ENCODE measurements at regions of chr11 and their contacts with region 1.

Region 1: DNA sequence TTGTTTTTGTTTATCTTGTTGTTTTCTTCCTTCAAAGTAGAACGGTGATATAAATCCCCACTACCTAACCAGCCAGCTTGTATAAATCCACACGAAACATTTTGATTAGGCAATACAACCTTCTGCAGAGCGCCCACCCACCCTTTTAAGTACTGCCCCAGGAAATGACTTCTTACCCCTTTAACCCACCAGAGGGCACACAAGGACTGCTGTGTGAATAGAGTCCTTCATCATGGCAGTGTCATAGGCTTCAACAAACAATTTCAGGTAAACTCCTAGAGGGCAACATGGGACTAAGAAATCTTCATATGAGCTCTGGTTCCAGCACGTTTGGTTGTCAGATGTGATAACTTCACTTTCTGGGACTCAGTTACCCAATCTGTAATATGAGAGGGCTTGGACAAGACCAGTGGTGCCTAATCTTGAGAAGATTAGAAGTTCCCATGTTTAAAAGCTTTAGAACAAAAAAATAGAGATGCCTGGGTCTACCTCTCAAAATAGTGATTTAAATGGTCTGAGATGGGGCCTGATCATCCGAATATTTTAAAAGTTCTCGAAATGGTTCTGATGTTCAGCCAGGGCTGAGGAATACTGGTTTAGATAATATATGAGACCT is 56.1 kb downstream of the PIWIL4 start:
- DNase-seq: peak; percentile 86
- H3K4me3 Mint-ChIP-seq: no peak overlapping the region
- H3K27ac Mint-ChIP-seq: no peak overlapping the region
- H3K4me1 Mint-ChIP-seq: peaks cover 6% of the 10 kb centered on the region
- H3K27me3 Mint-ChIP-seq: no peaks in the 10 kb centered on the region
- CTCF ChIP-seq: peak; percentile 81

Region 2: DNA sequence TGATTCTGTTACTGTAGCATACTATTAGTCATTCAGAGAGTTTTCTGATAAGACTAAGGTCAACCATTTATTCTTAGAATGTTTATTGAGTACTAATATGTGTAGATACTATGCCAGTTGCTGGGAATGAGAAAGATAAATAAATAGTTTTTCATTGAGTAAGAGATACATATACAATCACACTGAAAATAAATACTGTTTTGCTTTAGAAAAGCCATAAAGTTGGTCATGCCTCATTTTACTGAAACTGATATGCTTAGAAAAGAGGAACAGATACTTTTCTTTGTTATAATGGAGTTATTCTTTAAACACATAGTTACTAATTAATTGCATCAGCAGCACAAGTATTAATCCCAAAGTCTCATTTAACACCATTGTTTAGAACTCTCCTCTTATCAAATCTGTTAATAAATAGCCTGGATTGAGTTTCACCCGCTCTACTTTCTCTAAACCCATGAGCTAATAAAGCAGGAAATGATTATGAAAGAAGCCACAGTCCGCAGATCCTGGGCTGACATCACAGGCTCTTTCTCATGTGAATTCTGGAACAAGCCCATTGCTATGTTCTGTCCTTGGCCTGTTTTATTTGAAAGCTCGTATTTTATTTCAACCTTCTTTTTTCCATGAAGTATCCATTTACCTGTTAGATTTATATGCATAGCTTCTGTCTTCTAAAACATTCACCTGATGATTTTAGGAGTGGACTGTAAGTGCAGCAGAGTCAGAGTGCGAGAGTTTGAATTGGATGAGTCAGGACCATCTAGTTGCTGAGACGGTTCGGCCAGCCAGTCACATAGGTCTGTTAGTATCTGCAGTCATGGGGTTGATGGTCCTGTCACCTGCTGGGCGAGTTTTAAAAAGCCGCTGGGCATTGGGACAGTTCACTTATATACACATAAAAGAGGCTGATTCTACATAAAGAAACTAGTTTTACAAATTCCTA is 20.5 kb before region 1 on chr11:
- CTCF ChIA-PET with region 1: interaction called, 13 read pairs
- POLR2A ChIA-PET with region 1: no interaction called
- intact Hi-C with region 1: no loop called
- DNase-seq: no peak
- H3K4me3 Mint-ChIP-seq: no peak overlapping the region
- H3K27ac Mint-ChIP-seq: no peak overlapping the region
- H3K4me1 Mint-ChIP-seq: no peaks in the 10 kb centered on the region
- H3K27me3 Mint-ChIP-seq: no peaks in the 10 kb centered on the region
- CTCF ChIP-seq: no peak

Region 3: DNA sequence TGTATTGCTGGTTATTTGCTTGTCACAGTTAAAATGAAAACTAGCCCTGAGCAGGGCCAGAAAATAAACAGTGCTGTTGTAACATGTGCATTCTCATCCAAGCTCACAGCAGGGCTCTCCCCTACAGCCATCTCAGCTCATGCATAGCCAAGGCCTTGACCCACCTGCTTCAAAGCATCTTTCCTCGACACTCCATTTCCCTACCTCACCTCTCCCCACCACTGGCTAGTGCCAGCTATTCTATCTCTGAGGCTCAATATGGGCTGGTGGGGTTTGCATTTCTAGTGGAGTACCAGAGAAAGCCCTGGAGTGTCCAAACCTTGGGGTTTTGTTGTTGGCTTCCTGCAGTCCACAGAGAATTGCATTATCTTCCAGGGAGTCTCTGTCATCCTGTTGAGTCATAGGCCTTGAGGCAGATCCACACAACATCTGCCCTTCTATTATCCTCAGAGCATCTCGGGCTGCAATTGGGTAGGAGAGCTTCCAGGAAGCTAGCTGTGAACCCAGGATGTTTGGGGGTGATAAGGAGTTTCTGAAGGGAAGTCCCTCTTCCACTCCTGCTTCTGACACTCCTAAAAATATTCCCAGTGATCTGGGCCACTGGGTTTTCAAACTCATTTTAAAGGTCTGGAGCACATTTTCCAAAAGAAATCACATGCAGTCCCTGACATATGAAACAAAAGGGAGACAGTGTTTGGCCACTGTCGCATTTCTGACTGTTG is 108.8 kb after region 1 on chr11:
- CTCF ChIA-PET with region 1: interaction called, 18 read pairs
- POLR2A ChIA-PET with region 1: no interaction called
- intact Hi-C with region 1: no loop called
- DNase-seq: peak; percentile 95
- H3K4me3 Mint-ChIP-seq: no peak overlapping the region
- H3K27ac Mint-ChIP-seq: peak overlapping the region; percentile 77
- H3K4me1 Mint-ChIP-seq: peaks cover 34% of the 10 kb centered on the region
- H3K27me3 Mint-ChIP-seq: no peaks in the 10 kb centered on the region
- CTCF ChIP-seq: no peak

Region 4: DNA sequence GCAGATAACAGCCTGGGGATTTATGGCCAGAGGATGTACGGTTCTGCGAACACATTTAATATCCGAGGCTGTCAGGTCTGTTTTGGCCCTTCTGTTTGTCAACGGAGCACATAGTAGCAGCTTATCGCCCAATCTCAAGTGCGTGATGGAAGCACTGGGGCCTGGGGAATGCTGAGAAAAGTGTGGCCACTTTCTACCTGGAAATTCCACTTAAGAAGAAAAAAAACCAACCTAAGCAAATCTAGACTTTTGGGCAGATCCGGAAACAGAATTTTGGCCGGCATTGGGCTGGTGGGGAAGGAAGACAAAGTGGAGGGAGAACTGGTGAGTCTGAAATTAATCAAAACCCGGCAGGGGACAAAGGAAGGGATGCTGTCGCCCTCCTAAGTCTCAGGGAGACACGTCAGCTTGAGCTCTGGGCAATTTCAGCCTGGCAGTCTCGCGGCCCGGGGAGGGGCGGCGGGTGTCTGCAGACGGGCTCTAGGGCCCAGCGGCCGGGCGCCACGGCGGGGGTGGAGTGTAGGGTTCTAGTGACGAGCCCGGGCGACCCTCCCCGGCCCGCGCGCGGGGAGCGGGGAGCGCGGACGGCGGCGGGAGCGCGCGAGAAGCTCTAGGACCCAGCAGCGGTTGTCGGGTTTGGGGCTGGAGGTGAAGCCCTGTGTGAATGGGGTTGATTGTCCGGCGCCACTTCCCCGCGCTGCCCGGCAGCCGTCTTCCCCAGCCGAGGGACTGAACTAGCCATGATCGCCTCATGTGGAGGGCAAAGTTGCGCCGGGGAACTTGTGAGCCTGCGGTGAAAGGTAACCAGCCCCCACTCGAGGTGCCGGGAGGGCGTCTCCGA is 144.8 kb after region 1 on chr11 and contains the start of gene AMOTL1:
- CTCF ChIA-PET with region 1: interaction called, 25 read pairs
- POLR2A ChIA-PET with region 1: interaction called, 5 read pairs
- intact Hi-C with region 1: no loop called
- DNase-seq: peak; percentile 83
- H3K4me3 Mint-ChIP-seq: peak within 1 kb of the TSS; percentile 89
- H3K27ac Mint-ChIP-seq: peak within 1 kb of the TSS; percentile 90
- H3K4me1 Mint-ChIP-seq: peaks cover 32% of the 10 kb centered on the region
- H3K27me3 Mint-ChIP-seq: no peaks in the 10 kb centered on the region
- CTCF ChIP-seq: no peak
- total RNA-seq, gene AMOTL1: 76.6 and 77.0 TPM in 2 replicates

Region 5: DNA sequence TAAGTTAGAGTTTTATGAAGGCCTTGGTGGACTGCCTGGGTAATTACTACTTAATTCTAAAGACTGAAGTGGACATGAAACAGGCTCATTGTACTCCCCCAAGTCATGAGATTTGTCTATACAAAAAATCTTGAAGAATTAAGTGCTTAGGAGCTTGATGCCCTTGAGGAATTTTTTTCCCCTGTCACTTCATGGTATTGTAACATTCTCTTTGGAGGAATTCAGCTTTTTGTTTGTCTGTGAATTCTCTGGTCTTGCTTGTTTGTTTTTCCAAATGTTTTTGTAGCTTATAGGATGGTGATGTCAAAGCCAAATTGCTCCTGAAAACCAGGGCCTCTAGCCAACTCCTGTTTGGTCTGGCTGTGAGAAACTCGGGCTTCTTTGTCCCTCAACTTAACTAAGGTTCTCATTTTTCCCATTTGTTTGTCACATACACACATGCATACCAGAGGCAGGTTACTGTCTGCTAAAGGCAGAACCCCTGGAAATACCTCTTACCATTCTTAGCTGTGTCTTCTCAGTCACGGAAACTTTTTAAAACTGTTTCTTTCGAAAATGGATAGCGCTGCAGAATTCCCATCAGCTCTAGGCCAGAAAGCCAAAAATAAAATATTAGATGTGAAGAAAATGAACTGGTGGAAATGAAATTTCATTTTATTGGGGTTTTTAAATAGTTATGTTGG is 211.8 kb after region 1 on chr11:
- CTCF ChIA-PET with region 1: interaction called, 17 read pairs
- POLR2A ChIA-PET with region 1: no interaction called
- intact Hi-C with region 1: no loop called
- DNase-seq: peak; percentile 18
- H3K4me3 Mint-ChIP-seq: no peak overlapping the region
- H3K27ac Mint-ChIP-seq: peak overlapping the region; percentile 54
- H3K4me1 Mint-ChIP-seq: peaks cover 15% of the 10 kb centered on the region
- H3K27me3 Mint-ChIP-seq: no peaks in the 10 kb centered on the region
- CTCF ChIP-seq: no peak

Region 6: DNA sequence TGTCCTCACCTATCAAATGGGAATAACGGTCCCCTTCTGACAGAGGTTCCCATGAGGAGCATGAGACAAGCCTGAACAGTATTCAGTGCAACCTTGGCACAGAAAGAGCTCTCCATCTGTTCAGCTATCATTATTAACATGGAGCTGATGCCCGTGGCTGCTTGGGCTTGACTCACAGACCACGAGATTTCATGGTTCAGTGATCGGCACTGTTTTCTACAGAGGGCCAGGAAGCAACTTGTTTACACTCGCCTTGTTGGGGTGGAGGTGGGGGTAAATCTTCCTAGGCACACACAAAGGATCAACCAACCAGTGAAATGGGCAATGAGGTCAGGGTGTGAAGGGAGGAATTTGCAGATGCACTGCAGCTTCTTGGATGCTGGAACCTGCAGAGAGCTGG is 261.9 kb after region 1 on chr11:
- CTCF ChIA-PET with region 1: interaction called, 12 read pairs
- POLR2A ChIA-PET with region 1: no interaction called
- intact Hi-C with region 1: no loop called
- DNase-seq: peak; percentile 30
- H3K4me3 Mint-ChIP-seq: no peak overlapping the region
- H3K27ac Mint-ChIP-seq: no peak overlapping the region
- H3K4me1 Mint-ChIP-seq: peaks cover 3% of the 10 kb centered on the region
- H3K27me3 Mint-ChIP-seq: no peaks in the 10 kb centered on the region
- CTCF ChIP-seq: no peak

Region 7: GRCh38 chr11:94973099-94973968 is 350.1 kb after region 1 on chr11 and contains the starts of genes CWC15 and KDM4D:
- CTCF ChIA-PET with region 1: interaction called, 74 read pairs
- POLR2A ChIA-PET with region 1: interaction called, 6 read pairs
- intact Hi-C with region 1: loop called (anchors 1 kb)
- DNase-seq: peak; percentile 94
- H3K4me3 Mint-ChIP-seq: peak within 1 kb of the TSS; percentile 86
- H3K27ac Mint-ChIP-seq: peak within 1 kb of the TSS; percentile 96
- H3K4me1 Mint-ChIP-seq: peaks cover 24% of the 10 kb centered on the region
- H3K27me3 Mint-ChIP-seq: no peaks in the 10 kb centered on the region
- CTCF ChIP-seq: no peak
- total RNA-seq, gene CWC15: 59.6 and 61.9 TPM in 2 replicates
- total RNA-seq, gene KDM4D: 1.1 and 1.3 TPM in 2 replicates